Activated B cell treated with CpG ODN at 0.5 μM for 24 hours (primary cell): ENCODE measurements at regions of chr22 and their contacts with region 1.

Region 1: DNA sequence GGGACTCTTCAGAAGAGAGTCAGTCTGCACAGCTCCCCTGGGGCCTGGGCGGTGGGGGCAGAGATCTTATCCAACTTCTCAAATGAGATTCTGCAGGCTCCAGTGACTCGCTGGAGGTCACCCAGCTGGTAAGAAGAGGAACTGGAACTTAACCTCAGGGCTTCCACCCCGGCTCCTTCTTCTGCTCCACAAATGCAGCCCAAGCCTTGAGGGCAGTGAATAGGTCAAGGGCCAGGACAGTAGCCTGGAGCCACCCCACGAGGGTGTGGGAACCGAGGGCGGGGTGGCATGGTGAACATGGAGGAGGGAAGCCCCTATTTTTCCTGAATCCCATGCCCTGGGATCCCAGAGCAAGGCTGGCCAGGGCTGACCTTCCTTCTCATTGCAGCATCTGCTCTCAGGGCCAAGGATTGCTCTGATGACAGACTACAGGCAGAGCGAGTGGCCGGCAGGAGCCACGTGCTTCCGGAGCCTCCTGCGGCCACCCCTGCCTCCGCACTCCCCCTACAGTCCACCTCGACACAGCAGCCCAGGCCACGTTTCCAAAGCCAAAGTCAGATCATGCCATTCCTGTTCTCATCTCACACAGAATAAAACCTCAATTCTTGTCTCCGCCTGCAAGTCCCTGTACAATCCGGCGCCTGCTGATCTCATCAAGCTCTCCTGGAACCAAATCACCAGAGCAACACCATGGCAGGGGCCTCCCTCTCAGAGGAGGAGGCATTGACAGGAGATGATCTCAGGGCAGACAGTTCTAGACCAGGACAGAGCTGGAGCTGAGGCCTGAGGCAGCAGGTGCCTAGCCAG is 21.1 kb upstream of the UPK3A start:
- DNase-seq: peak; percentile 78
- ATAC-seq: peak; percentile 97
- H3K4me3 Mint-ChIP-seq: peak overlapping the region; percentile 77
- H3K27ac Mint-ChIP-seq: peak overlapping the region; percentile 81
- H3K4me1 Mint-ChIP-seq: peaks cover 52% of the 10 kb centered on the region
- H3K27me3 Mint-ChIP-seq: no peaks in the 10 kb centered on the region
- CTCF ChIP-seq: no peak

Region 2: DNA sequence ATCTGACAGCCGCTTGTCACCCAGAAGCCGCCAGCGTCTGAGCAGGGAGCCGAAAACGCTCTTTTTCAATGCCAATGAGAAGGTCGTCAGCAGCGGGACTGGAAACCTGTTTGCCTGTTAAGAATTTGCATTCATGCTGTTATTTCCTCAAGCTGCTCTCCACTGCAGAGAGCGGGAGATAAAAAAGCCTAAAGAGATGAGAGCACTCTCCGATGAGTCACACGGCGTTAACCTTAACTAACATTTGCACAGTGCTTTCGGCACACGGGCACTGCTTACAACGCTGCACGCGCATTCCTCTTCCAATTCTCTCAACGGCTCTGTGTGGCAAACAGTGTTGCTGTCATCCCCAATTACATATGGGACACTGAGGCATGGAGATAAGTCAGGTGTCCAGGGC is 725.6 kb before region 1 on chr22:
- CTCF ChIA-PET with region 1: no interaction called
- POLR2A ChIA-PET with region 1: no interaction called
- intact Hi-C with region 1: no loop called
- DNase-seq: no peak
- ATAC-seq: no peak
- H3K4me3 Mint-ChIP-seq: no peak overlapping the region
- H3K27ac Mint-ChIP-seq: no peak overlapping the region
- H3K4me1 Mint-ChIP-seq: peaks cover 1% of the 10 kb centered on the region
- H3K27me3 Mint-ChIP-seq: peaks cover 24% of the 10 kb centered on the region
- CTCF ChIP-seq: no peak

Region 3: DNA sequence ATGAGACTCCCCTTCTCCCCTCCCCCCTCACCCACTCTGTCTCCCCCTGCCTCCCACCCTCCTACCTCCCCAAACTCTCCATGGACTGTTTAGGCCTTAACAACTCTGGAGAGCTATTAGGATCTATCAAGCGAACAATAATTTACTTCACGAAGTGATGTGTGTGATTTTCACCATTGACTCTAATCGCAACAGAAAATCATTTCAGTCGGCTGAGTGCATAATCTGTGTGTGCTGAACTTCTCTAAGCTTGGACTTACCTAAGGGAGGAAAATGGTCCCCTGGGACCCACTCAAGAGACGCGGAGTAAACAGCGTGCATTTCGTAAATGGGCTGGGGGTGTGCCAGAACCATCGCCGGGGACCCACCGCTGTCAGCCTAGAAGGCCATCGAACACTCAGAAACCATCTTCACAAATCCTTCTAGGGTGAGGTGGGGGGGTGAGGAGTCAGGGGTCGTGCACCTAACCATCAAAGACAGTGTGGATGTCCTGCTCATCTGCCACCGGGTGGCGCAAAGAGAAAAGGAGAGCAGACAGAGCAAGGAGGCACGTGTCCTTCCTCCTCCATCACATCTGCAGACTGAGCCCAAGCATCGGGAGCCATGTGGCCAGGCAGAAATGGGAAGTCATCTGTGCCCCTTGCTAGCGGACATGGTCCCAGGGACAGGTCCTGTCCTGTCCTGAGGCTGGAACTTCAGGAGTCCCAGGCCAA is 162.0 kb before region 1 on chr22:
- CTCF ChIA-PET with region 1: no interaction called
- POLR2A ChIA-PET with region 1: no interaction called
- intact Hi-C with region 1: loop called (anchors 5 kb)
- DNase-seq: no peak
- ATAC-seq: no peak
- H3K4me3 Mint-ChIP-seq: no peak overlapping the region
- H3K27ac Mint-ChIP-seq: no peak overlapping the region
- H3K4me1 Mint-ChIP-seq: peaks cover 3% of the 10 kb centered on the region
- H3K27me3 Mint-ChIP-seq: peaks cover 17% of the 10 kb centered on the region
- CTCF ChIP-seq: no peak

Region 4: DNA sequence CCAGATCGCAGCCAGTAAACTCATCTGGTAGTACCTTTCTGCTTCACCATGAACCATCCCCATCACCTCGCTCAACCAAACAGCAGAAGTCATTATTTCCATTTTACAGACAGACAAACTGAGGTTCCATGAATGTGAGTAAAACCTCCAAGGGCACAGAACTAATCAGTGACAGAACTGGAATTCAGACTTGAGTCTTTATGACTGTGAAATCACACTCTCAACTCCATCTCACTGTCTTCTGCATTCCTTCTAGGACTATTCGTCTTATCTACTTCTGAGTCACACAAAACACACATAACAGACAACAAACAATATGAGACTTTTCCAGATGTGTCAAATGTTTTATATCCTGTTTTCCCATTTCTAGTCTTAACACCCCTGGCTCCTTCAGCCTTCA is 109.3 kb before region 1 on chr22:
- CTCF ChIA-PET with region 1: no interaction called
- POLR2A ChIA-PET with region 1: no interaction called
- intact Hi-C with region 1: no loop called
- DNase-seq: no peak
- ATAC-seq: no peak
- H3K4me3 Mint-ChIP-seq: no peak overlapping the region
- H3K27ac Mint-ChIP-seq: no peak overlapping the region
- H3K4me1 Mint-ChIP-seq: no peaks in the 10 kb centered on the region
- H3K27me3 Mint-ChIP-seq: no peaks in the 10 kb centered on the region
- CTCF ChIP-seq: no peak

Region 5: DNA sequence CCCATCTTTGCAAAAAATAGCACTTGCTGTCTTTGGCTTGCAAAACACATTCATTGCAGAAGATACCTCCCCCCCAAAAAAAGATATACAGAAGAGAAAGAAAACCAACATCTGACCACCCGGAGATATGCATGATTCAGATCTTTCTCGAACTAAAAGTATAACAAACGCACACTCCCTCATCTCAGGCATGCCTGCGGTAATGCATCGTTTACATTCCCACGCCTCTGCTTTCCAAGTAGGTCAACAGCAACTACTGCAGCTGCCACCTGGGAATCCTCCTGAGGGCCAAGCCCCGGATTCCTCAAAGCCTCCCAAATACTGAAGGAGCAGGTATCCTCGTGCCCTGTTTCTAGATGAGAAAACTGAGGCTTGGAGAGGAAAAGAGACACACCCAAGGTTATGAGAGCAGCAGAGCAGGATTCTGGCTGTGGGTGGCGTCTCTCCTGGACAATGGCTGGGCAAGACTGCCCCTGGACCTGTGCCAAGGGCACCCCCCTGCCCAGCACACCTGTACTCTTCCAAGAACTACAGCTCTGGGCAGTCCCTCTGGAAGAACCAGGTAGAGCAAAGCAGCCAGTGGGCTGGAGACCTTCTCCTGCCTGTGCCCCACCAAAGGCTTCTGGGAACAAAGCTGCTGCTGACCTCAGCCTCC is 61.9 kb before region 1 on chr22:
- CTCF ChIA-PET with region 1: no interaction called
- POLR2A ChIA-PET with region 1: no interaction called
- intact Hi-C with region 1: no loop called
- DNase-seq: no peak
- ATAC-seq: no peak
- H3K4me3 Mint-ChIP-seq: no peak overlapping the region
- H3K27ac Mint-ChIP-seq: no peak overlapping the region
- H3K4me1 Mint-ChIP-seq: no peaks in the 10 kb centered on the region
- H3K27me3 Mint-ChIP-seq: no peaks in the 10 kb centered on the region
- CTCF ChIP-seq: no peak

Region 6: GRCh38 chr22:45218976-45219375 is 44.7 kb before region 1 on chr22:
- CTCF ChIA-PET with region 1: no interaction called
- POLR2A ChIA-PET with region 1: no interaction called
- intact Hi-C with region 1: loop called (anchors 1 kb)
- DNase-seq: no peak
- ATAC-seq: peak; percentile 96
- H3K4me3 Mint-ChIP-seq: no peak overlapping the region
- H3K27ac Mint-ChIP-seq: peak overlapping the region; percentile 46
- H3K4me1 Mint-ChIP-seq: peaks cover 60% of the 10 kb centered on the region
- H3K27me3 Mint-ChIP-seq: no peaks in the 10 kb centered on the region
- CTCF ChIP-seq: no peak

Region 7: DNA sequence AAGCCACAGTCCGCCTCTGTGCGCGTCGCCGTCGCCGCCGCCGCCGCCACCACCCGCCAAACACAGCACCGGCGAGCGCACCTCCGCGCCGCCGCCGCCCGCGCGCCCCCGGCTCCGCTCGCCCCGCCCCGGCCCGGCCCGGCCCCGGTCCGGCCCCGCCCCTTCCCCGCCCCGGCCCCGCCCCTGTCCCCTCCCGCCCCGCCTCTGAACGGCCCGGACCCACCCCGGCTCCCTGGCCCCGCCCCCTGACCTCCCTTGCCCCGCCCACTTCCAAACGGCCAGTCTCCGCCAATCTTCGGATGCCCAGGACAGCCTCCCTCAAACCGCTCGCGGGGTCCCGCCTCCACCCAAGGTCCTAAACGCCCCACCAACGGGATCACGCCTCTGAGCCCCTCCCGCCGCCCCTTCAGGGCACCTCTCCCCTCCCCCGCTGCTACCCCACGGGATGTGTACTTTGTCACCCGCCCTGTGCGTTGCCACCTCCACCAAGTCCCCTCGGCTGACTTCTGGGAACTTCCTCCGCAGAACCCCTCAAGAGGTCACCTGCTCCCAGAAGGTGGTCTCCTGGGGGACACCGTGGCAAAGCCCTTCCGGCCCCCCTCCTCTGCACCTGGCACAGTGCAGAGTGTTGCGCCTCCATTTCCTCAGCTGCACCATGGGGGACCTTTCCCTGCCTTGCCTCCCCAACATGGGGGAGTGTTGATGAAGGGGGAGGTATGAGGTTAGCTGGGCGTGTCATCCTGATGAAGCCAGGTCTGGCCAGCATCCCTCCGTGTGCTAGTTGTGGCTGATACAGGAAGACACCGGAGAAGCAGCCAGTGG is 22.6 kb before region 1 on chr22 and contains the start of gene KIAA0930:
- CTCF ChIA-PET with region 1: interaction called, 5 read pairs
- POLR2A ChIA-PET with region 1: interaction called, 27 read pairs
- intact Hi-C with region 1: loop called (anchors 1 kb)
- DNase-seq: peak; percentile 71
- ATAC-seq: peak; percentile 69
- H3K4me3 Mint-ChIP-seq: peak within 1 kb of the TSS; percentile 87
- H3K27ac Mint-ChIP-seq: peak within 1 kb of the TSS; percentile 88
- H3K4me1 Mint-ChIP-seq: peaks cover 60% of the 10 kb centered on the region
- H3K27me3 Mint-ChIP-seq: no peaks in the 10 kb centered on the region
- CTCF ChIP-seq: no peak
- total RNA-seq, gene KIAA0930: 39.5 and 42.2 TPM in 2 replicates

Region 8: DNA sequence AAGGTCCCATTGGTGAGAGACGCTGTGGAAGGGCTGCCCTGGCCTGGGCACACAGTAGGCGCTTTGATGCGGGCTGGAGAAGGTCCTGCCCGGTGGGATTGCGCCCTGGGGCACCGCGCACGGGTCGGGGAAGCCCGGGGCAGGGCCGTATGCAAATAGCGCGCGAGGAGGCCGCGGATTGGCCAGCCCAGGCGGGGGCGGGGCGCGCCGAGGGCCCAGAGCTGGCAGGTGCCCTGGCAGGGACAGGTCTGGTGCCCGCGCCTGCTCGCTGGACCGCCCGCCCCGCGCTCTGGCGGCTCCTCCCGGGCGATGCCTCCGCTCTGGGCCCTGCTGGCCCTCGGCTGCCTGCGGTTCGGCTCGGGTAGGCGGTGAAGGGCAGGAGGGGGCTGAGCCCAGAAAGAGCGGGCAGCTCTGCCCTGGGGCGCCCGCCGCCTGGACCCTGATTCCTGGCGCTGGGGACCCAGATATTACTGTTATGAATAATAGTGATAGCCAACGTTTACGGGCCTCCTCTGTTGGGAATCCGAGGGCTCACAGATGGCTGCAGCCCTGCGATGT is 21.1 kb after region 1 on chr22 and contains the start of gene UPK3A:
- CTCF ChIA-PET with region 1: interaction called, 4 read pairs
- POLR2A ChIA-PET with region 1: interaction called, 14 read pairs
- intact Hi-C with region 1: no loop called
- DNase-seq: peak; percentile 84
- ATAC-seq: peak; percentile 86
- H3K4me3 Mint-ChIP-seq: peak within 1 kb of the TSS; percentile 54
- H3K27ac Mint-ChIP-seq: peak within 1 kb of the TSS; percentile 61
- H3K4me1 Mint-ChIP-seq: peaks cover 57% of the 10 kb centered on the region
- H3K27me3 Mint-ChIP-seq: no peaks in the 10 kb centered on the region
- CTCF ChIP-seq: no peak
- total RNA-seq, gene UPK3A: 1.4 and 1.6 TPM in 2 replicates

Region 9: DNA sequence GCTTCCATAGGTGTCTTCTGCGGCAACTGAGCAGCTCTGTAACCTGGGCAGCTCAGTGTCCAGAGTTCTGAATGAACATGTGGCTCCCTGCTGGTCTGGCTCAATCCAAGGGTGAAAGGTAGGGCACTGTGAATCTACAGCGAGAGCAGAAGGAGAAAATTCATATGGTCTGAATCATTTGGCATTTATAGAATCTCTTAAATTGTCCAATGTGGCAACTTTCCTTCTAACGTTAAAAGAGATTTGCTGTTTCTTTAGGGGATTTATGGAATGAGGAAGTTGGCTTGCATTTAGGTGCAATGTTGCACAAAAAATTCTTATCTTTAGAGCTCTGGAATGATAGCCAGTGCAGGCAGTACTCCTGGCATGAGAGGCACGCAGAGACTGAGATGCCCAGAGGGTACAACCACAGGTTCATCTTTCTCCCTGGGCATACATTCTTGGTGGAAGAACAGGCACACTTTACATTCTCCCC is 425.0 kb after region 1 on chr22:
- CTCF ChIA-PET with region 1: no interaction called
- POLR2A ChIA-PET with region 1: no interaction called
- intact Hi-C with region 1: no loop called
- DNase-seq: no peak
- ATAC-seq: no peak
- H3K4me3 Mint-ChIP-seq: no peak overlapping the region
- H3K27ac Mint-ChIP-seq: no peak overlapping the region
- H3K4me1 Mint-ChIP-seq: peaks cover 12% of the 10 kb centered on the region
- H3K27me3 Mint-ChIP-seq: no peaks in the 10 kb centered on the region
- CTCF ChIP-seq: no peak